IMR-90 (cell line): ENCODE measurements at regions of chr1 and their contacts with region 1.

Region 1: DNA sequence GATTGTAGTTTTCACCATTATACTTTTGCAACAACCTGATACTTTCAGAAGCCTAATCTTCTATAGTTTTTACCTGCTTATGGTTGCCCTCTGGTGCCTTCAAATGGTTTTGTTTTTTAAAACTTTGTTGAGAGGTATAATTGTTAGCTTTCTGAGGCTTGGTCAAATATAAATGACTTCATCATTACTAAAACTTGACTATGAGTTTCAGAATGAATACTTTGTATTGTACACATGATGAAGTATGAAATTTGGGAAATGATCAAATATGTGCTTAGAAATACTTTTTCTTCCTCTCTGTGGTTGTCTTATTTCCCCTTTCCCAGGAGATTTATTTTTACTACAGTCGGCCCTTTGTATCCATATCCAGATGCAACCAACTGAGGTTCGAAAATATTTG is 151.8 kb upstream of the B3GALT2 start:
- DNase-seq: peak; percentile 64
- ATAC-seq: peak; percentile 21
- H3K4me3 ChIP-seq: no peak overlapping the region
- H3K27ac ChIP-seq: peak overlapping the region; percentile 4; the same call in 1 of the 2 replicates
- H3K4me1 ChIP-seq: peaks cover 11% of the 10 kb centered on the region
- H3K27me3 ChIP-seq: no peaks in the 10 kb centered on the region
- CTCF ChIP-seq: peak; percentile 28; the same call in 1 of the 2 replicates
- POLR2A ChIP-seq: no peak
- RAD21 ChIP-seq: peak; percentile 34

Region 2: DNA sequence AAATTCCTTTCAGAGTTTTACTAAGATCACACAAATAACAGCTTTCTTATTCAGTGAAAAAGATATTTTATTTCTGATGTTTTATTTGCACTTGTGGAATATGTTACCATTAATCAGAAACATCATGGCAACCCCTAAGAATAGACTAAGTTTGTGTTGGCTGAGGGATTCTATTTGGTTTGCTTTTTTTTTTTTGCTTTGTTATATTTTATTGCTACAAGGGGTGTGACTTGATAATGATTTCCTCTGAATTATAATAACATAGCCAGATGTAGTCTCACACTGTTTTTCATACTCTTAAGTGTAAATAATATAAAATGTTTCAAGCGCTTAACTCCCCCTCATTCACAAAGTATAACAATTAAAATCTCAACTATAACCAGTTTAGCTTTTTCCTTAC is 252.9 kb before region 1 on chr1:
- CTCF ChIA-PET with region 1: interaction called, 10 read pairs
- POLR2A ChIA-PET with region 1: no interaction called
- dilution Hi-C with region 1: no loop called
- in situ Hi-C with region 1: no loop called
- intact Hi-C with region 1: no loop called
- DNase-seq: no peak
- ATAC-seq: no peak
- H3K4me3 ChIP-seq: no peak overlapping the region
- H3K27ac ChIP-seq: no peak overlapping the region
- H3K4me1 ChIP-seq: no peaks in the 10 kb centered on the region
- H3K27me3 ChIP-seq: no peaks in the 10 kb centered on the region
- CTCF ChIP-seq: no peak
- POLR2A ChIP-seq: no peak
- RAD21 ChIP-seq: no peak

Region 3: DNA sequence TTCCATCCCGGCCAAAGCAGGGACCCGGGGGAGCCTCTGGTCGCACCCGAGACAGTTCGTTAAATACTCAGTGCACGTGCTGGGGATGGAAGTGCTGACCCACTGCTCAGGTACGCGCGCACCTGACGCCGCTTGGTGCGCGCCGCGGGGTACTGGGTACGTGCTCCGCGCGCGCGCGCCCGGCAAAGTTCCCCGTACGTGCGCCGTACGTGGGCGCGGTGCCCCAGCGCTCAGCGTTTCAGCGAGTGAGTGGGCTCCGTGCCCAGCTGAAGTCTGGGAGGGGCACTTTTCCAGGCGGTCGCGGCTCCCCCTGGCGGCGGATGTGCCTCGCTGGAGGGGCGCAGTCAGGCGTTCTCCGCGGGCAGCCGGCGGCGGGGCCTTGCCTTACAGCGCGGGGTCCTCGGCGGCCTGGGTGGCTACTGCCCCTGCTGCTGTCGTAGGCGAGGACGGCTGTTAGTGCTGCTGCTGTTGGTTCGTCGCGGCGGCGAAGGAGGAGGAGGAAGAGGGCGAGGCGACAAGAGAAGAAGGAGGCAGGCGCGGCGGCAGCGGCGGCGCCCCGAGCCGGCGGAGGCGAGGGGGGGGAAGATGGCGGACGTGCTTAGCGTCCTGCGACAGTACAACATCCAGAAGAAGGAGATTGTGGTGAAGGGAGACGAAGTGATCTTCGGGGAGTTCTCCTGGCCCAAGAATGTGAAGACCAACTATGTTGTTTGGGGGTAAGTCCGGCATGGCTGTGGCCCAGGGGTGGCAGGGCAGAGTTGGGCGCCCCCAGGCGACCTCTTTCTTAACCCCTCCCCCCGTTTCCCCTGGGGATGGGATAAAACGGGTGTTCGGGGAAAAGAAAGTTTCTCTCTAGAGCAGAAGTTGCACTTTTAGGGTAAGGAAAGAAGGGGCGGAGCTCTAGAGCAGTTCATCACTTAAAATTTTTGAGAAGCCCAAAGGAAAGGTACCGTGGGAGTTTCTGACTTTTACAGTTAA is 216.3 kb before region 1 on chr1 and contains the start of gene CDC73:
- CTCF ChIA-PET with region 1: no interaction called
- POLR2A ChIA-PET with region 1: no interaction called
- dilution Hi-C with region 1: no loop called
- in situ Hi-C with region 1: no loop called
- intact Hi-C with region 1: no loop called
- DNase-seq: peak; percentile 95
- ATAC-seq: peak; percentile 97
- H3K4me3 ChIP-seq: peak within 1 kb of the TSS; percentile 71
- H3K27ac ChIP-seq: peak within 1 kb of the TSS; percentile 89
- H3K4me1 ChIP-seq: no peaks in the 10 kb centered on the region
- H3K27me3 ChIP-seq: no peaks in the 10 kb centered on the region
- CTCF ChIP-seq: peak; percentile 98
- POLR2A ChIP-seq: peak; percentile 91
- RAD21 ChIP-seq: peak; percentile 86
- total RNA-seq, gene CDC73: 29.6 and 44.7 TPM in 2 replicates

Region 4: DNA sequence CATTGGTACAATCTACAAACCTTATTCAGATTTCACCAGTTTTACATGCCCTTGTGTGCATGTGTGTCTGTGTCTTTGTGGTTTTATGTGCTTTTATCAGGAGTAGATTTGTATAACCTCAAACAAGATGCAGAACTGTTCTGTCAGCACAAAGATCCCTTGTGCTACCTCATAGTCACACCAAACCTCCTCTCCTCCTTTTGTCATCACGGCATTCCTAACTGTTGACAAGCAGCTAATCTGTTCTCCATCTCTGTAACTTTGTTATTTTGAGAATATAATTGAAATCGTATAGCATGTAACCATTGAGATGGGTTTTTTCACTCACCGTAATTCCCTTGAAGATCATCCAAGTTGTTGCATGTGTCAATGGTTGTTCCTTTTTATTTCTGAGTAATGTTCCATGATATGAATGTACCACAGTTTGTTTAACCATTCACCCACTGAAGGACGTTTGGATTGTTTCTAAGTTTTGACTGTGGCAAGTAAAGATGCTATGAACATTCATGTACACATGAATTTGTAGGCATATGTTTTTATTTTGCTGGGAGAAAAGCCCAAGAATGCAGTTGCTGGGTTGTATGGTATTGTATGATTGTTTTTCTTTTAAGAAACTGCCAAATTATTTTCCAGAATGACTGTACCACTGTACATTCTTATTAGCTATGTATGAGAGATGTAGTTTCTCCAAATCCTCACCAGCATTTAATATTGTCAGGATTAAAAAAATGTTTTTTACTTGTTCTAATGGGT is 73.7 kb before region 1 on chr1:
- CTCF ChIA-PET with region 1: no interaction called
- POLR2A ChIA-PET with region 1: no interaction called
- dilution Hi-C with region 1: no loop called
- in situ Hi-C with region 1: no loop called
- intact Hi-C with region 1: loop called (anchors 5 kb)
- DNase-seq: peak; percentile 14
- ATAC-seq: no peak
- H3K4me3 ChIP-seq: no peak overlapping the region
- H3K27ac ChIP-seq: no peak overlapping the region
- H3K4me1 ChIP-seq: peaks cover 3% of the 10 kb centered on the region
- H3K27me3 ChIP-seq: no peaks in the 10 kb centered on the region
- CTCF ChIP-seq: no peak
- POLR2A ChIP-seq: no peak
- RAD21 ChIP-seq: no peak